GM13976 (cell line): ENCODE measurements at regions of chr12 and their contacts with region 1.

Region 1: DNA sequence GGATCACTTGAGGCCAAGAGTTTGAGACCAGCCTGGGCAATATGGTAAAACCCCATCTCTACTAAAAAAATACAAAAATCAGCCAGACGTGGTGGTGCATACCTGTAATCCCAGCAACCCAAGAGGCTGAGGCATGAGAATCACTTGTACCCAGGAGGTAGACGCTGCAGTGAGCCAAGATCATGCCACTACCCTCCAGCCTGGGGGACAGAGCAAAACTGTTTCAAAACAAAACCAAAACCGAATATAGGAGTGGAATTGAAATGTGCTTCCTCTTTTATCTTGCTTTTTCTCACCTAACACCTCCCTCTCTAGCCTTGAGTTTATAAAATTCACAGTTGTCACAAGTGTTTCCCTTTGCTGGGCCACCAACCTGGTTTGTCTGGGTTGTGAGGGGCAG is 181.9 kb downstream of the PAH start:
- DNase-seq: peak; percentile 38
- CTCF ChIP-seq: no peak

Region 2: GRCh38 chr12:101939856-101940265 is 795.2 kb before region 1 on chr12:
- in situ Hi-C with region 1: loop called (anchors 10 kb)
- DNase-seq: peak; percentile 27
- CTCF ChIP-seq: peak; percentile 66